ENCODE measurements at regions of chr22 and their contacts with region 1.

Region 1: GRCh38 chr22:33302049-33302545 is 243.9 kb upstream of the SYN3 start:
- DNase-seq: peak; percentile 39
- ATAC-seq: peak; percentile 71
- H3K4me3 ChIP-seq: no peak overlapping the region
- H3K27ac ChIP-seq: no peak overlapping the region
- H3K4me1 ChIP-seq: peaks cover 50% of the 10 kb centered on the region
- H3K27me3 ChIP-seq: no peaks in the 10 kb centered on the region
- CTCF ChIP-seq: peak; percentile 96 to 99 (median 97); a peak in 5 of 6 replicates
- EP300 ChIP-seq: no peak
- POLR2A ChIP-seq: no peak
- RAD21 ChIP-seq: peak; percentile 99

Region 2: DNA sequence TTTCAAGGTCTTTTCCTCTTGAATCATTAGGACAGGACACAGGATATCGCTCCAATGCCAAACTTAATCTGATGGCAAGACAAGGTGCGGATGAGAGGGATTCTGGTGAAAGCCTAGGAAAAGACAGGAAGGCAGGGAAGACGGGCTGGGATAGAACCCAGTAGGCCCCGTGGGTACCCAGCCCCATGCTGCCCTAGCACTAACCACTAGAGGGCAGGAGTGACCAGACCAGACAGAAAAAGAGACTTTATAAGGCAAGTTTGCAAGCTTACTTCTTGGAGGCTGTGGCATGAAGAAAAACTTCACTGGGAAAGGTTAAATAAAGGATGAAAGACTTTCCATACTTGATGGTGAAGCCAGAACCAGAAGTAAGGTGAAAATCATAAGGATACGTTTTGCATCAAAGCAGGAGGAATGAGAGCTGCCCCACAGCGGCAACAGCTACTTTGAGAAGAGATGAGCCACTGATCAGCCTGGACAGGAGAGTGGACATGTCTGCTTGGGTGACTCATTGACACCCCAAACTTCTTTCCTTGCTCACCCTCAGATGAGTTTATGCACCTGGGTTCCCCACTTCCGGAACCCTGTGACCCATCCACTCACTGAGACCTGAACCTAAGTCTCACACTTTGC is 283.7 kb before region 1 on chr22:
- CTCF ChIA-PET with region 1: interaction called, 13 read pairs
- POLR2A ChIA-PET with region 1: no interaction called
- RAD21 ChIA-PET with region 1: interaction called, 15 read pairs
- SMC1A ChIA-PET with region 1: interaction called, 9 read pairs
- in situ Hi-C with region 1: no loop called
- intact Hi-C with region 1: no loop called
- DNase-seq: peak; percentile 8
- ATAC-seq: peak; percentile 88
- H3K4me3 ChIP-seq: no peak overlapping the region
- H3K27ac ChIP-seq: no peak overlapping the region
- H3K4me1 ChIP-seq: no peaks in the 10 kb centered on the region
- H3K27me3 ChIP-seq: no peaks in the 10 kb centered on the region
- CTCF ChIP-seq: peak; percentile 85 to 90 (median 87)
- EP300 ChIP-seq: no peak
- POLR2A ChIP-seq: no peak
- RAD21 ChIP-seq: peak; percentile 83

Region 3: GRCh38 chr22:33101550-33101949 is 200.5 kb before region 1 on chr22:
- CTCF ChIA-PET with region 1: no interaction called
- POLR2A ChIA-PET with region 1: no interaction called
- RAD21 ChIA-PET with region 1: no interaction called
- SMC1A ChIA-PET with region 1: no interaction called
- in situ Hi-C with region 1: no loop called
- intact Hi-C with region 1: no loop called
- DNase-seq: no peak
- ATAC-seq: no peak
- H3K4me3 ChIP-seq: no peak overlapping the region
- H3K27ac ChIP-seq: no peak overlapping the region
- H3K4me1 ChIP-seq: no peaks in the 10 kb centered on the region
- H3K27me3 ChIP-seq: no peaks in the 10 kb centered on the region
- CTCF ChIP-seq: no peak
- EP300 ChIP-seq: no peak
- POLR2A ChIP-seq: no peak
- RAD21 ChIP-seq: no peak

Region 4: DNA sequence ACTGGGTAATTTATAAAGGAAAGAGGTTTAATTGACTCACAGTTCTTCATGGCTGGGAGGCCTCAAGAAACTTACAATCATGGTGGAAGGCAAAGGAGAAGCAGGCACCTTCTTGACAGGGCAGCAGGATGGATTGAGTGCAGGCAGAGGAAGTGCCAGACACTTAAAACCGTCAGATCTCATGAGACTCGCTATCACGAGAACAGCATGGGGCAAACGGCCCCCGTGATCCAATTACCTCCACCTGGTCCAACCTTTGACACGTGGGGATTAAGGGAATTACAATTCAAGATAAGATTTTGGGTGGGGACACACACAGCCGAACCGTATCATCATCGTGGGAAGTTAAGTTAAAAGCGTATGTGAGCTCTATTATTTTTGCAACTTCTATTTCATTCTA is 172.5 kb before region 1 on chr22:
- CTCF ChIA-PET with region 1: no interaction called
- POLR2A ChIA-PET with region 1: no interaction called
- RAD21 ChIA-PET with region 1: no interaction called
- SMC1A ChIA-PET with region 1: no interaction called
- in situ Hi-C with region 1: no loop called
- intact Hi-C with region 1: no loop called
- DNase-seq: no peak
- ATAC-seq: no peak
- H3K4me3 ChIP-seq: no peak overlapping the region
- H3K27ac ChIP-seq: no peak overlapping the region
- H3K4me1 ChIP-seq: no peaks in the 10 kb centered on the region
- H3K27me3 ChIP-seq: no peaks in the 10 kb centered on the region
- CTCF ChIP-seq: no peak
- EP300 ChIP-seq: no peak
- POLR2A ChIP-seq: no peak
- RAD21 ChIP-seq: no peak

Region 5: GRCh38 chr22:33314316-33314715 is 12.2 kb after region 1 on chr22:
- CTCF ChIA-PET with region 1: interaction called, 10 read pairs
- POLR2A ChIA-PET with region 1: no interaction called
- RAD21 ChIA-PET with region 1: interaction called, 11 read pairs
- SMC1A ChIA-PET with region 1: interaction called, 10 read pairs
- in situ Hi-C with region 1: no loop called
- intact Hi-C with region 1: no loop called
- DNase-seq: no peak
- ATAC-seq: no peak
- H3K4me3 ChIP-seq: no peak overlapping the region
- H3K27ac ChIP-seq: no peak overlapping the region
- H3K4me1 ChIP-seq: no peaks in the 10 kb centered on the region
- H3K27me3 ChIP-seq: no peaks in the 10 kb centered on the region
- CTCF ChIP-seq: no peak
- EP300 ChIP-seq: no peak
- POLR2A ChIP-seq: no peak
- RAD21 ChIP-seq: no peak

Region 6: GRCh38 chr22:33467620-33468095 is 165.6 kb after region 1 on chr22:
- CTCF ChIA-PET with region 1: interaction called, 34 read pairs
- POLR2A ChIA-PET with region 1: interaction called, 5 read pairs
- RAD21 ChIA-PET with region 1: interaction called, 14 read pairs
- SMC1A ChIA-PET with region 1: interaction called, 14 read pairs
- in situ Hi-C with region 1: no loop called
- intact Hi-C with region 1: loop called (anchors 1 kb)
- DNase-seq: no peak
- ATAC-seq: no peak
- H3K4me3 ChIP-seq: no peak overlapping the region
- H3K27ac ChIP-seq: no peak overlapping the region
- H3K4me1 ChIP-seq: peaks cover 24% of the 10 kb centered on the region
- H3K27me3 ChIP-seq: no peaks in the 10 kb centered on the region
- CTCF ChIP-seq: peak in 1 of 3 experiments; percentile 15; a peak in 1 of 6 replicates
- EP300 ChIP-seq: no peak
- POLR2A ChIP-seq: no peak
- RAD21 ChIP-seq: no peak

Region 7: DNA sequence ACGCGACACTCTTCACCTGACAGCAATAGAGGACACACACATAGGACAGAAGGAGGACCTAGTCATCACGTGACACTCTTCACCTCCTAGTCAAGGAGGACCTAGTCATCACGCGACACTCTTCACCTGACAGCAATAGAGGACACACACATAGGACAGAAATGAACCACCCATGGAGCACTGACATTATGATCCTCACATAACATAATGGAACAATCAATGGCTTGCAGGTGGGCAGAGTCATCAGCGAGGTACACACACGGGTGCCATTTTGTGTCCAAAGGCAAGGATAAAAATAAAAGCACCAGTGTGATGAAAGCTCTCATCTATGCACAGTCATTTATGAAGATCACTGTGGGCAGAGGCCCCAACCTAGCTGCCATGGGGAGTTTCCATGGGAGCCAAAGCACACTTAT is 263.5 kb after region 1 on chr22:
- CTCF ChIA-PET with region 1: interaction called, 43 read pairs
- POLR2A ChIA-PET with region 1: interaction called, 3 read pairs
- RAD21 ChIA-PET with region 1: interaction called, 13 read pairs
- SMC1A ChIA-PET with region 1: interaction called, 23 read pairs
- in situ Hi-C with region 1: no loop called
- intact Hi-C with region 1: loop called (anchors 2 kb)
- DNase-seq: no peak
- ATAC-seq: peak; percentile 30
- H3K4me3 ChIP-seq: no peak overlapping the region
- H3K27ac ChIP-seq: peak overlapping the region; percentile 64
- H3K4me1 ChIP-seq: peaks cover 46% of the 10 kb centered on the region
- H3K27me3 ChIP-seq: no peaks in the 10 kb centered on the region
- CTCF ChIP-seq: no peak
- EP300 ChIP-seq: no peak
- POLR2A ChIP-seq: no peak
- RAD21 ChIP-seq: no peak

Region 8: GRCh38 chr22:33920927-33921524 is 618.9 kb after region 1 on chr22:
- CTCF ChIA-PET with region 1: interaction called, 16 read pairs
- POLR2A ChIA-PET with region 1: interaction called, 5 read pairs
- RAD21 ChIA-PET with region 1: interaction called, 12 read pairs
- SMC1A ChIA-PET with region 1: interaction called, 12 read pairs
- in situ Hi-C with region 1: loop called (anchors 5 kb)
- intact Hi-C with region 1: loop called (anchors 2 kb)
- DNase-seq: peak; percentile 43
- ATAC-seq: peak; percentile 82
- H3K4me3 ChIP-seq: peak overlapping the region; percentile 93
- H3K27ac ChIP-seq: no peak overlapping the region
- H3K4me1 ChIP-seq: peaks cover 3% of the 10 kb centered on the region; the same call in 1 of the 2 replicates
- H3K27me3 ChIP-seq: peaks cover 0 to 1% of the 10 kb centered on the region in 2 experiments; a peak in 2 of 4 replicates
- CTCF ChIP-seq: no peak
- EP300 ChIP-seq: no peak
- POLR2A ChIP-seq: peak; percentile 92
- RAD21 ChIP-seq: no peak

Region 9: DNA sequence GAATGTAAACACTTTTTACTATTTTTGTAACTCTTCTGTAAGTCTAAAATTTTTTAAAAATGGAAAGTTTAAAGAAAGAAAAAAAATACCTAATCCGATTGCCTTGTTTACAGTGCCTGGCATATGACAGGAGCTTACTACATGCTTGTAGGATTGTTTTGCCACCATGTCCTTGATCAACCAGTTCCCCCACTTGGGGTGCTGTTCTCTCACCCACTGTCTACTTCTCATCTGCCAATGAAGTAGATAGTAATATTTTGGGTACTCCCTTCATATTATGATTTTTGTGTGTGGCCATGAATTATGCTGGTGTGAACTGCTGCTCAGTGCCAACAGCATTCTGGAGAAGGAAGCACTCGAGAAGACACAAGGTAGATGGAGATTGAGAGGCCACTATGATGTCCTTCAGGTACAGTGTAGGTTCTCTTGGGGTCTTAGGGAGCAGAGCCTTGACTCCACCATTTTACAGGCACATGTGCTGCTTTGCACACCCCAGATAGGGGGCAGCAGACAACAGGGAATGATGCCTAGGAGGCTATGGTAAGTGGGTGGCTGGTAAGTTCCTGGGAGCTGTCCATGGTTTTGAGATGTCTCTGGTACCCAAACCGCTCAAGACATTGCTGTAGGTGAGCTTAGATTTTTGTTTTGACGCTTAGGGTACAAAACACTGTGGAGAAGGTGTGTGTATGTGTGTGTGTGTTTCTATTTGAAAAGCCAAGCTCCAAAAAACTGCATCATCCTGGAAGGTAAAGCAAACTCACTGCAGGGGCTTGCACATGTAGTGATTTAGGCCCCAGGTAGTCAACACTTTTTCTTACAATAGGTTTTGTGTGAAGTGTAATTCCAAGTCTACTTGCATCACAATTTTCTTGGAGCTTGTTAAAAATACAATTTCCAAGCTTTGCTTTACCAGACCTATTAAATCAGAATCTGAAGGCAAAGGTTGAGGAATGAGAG is 1112.7 kb after region 1 on chr22:
- CTCF ChIA-PET with region 1: no interaction called
- POLR2A ChIA-PET with region 1: no interaction called
- RAD21 ChIA-PET with region 1: no interaction called
- SMC1A ChIA-PET with region 1: no interaction called
- in situ Hi-C with region 1: no loop called
- intact Hi-C with region 1: loop called (anchors 10 kb)
- DNase-seq: peak; percentile 39
- ATAC-seq: peak; percentile 75
- H3K4me3 ChIP-seq: no peak overlapping the region
- H3K27ac ChIP-seq: no peak overlapping the region
- H3K4me1 ChIP-seq: no peaks in the 10 kb centered on the region
- H3K27me3 ChIP-seq: no peaks in the 10 kb centered on the region
- CTCF ChIP-seq: peak; percentile 80 to 91 (median 83); a peak in 4 of 6 replicates
- EP300 ChIP-seq: no peak
- POLR2A ChIP-seq: no peak
- RAD21 ChIP-seq: peak; percentile 95